ENCODE measurements at regions of chr17 and their contacts with region 1.

Region 1: GRCh38 chr17:58692239-58693055 is at the start of gene RAD51C:
- DNase-seq: peak; percentile 70 to 92 (median 84)
- ATAC-seq: peak; percentile 96
- H3K4me3 ChIP-seq: peak within 1 kb of the TSS; percentile 79
- H3K4me3 Mint-ChIP-seq: peak within 1 kb of the TSS; percentile 93
- H3K27ac ChIP-seq: peak within 1 kb of the TSS; percentile 66 to 83
- H3K27ac Mint-ChIP-seq: peak within 1 kb of the TSS; percentile 86
- H3K4me1 ChIP-seq: peaks cover 13% of the 10 kb centered on the region
- H3K4me1 Mint-ChIP-seq: peaks cover 28% of the 10 kb centered on the region
- H3K27me3 ChIP-seq: no peaks in the 10 kb centered on the region
- H3K27me3 Mint-ChIP-seq: no peaks in the 10 kb centered on the region
- CTCF ChIP-seq: no peak
- total RNA-seq, gene RAD51C: 10.4 to 11.6 TPM

Region 2: DNA sequence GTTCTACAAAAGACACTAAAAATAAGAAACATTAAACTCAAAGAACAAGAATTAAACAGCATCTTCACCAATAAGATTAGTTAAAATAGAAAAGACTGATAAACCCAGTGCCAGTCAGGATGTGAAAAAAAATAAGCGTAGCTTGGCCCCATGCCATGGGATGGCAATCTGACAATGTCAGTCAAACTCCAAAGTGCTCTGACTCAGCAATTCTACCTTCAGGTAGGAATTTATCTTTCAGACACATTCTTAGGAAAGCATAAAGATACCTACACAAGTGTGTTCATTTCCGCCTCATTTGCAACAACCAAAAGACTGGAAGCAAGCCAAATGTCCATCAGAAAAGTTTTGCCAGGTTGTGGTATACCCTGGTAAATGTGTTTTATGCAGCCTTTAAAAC is 402.6 kb before region 1 on chr17:
- CTCF ChIA-PET with region 1: no interaction called
- POLR2A ChIA-PET with region 1: no interaction called
- intact Hi-C with region 1: no loop called
- DNase-seq: no peak
- ATAC-seq: no peak
- H3K4me3 ChIP-seq: no peak overlapping the region
- H3K4me3 Mint-ChIP-seq: no peak overlapping the region
- H3K27ac ChIP-seq: no peak overlapping the region
- H3K27ac Mint-ChIP-seq: no peak overlapping the region
- H3K4me1 ChIP-seq: no peaks in the 10 kb centered on the region
- H3K4me1 Mint-ChIP-seq: no peaks in the 10 kb centered on the region
- H3K27me3 ChIP-seq: peaks cover 0 to 2% of the 10 kb centered on the region in 2 experiments
- H3K27me3 Mint-ChIP-seq: peaks cover 11% of the 10 kb centered on the region
- CTCF ChIP-seq: no peak

Region 3: DNA sequence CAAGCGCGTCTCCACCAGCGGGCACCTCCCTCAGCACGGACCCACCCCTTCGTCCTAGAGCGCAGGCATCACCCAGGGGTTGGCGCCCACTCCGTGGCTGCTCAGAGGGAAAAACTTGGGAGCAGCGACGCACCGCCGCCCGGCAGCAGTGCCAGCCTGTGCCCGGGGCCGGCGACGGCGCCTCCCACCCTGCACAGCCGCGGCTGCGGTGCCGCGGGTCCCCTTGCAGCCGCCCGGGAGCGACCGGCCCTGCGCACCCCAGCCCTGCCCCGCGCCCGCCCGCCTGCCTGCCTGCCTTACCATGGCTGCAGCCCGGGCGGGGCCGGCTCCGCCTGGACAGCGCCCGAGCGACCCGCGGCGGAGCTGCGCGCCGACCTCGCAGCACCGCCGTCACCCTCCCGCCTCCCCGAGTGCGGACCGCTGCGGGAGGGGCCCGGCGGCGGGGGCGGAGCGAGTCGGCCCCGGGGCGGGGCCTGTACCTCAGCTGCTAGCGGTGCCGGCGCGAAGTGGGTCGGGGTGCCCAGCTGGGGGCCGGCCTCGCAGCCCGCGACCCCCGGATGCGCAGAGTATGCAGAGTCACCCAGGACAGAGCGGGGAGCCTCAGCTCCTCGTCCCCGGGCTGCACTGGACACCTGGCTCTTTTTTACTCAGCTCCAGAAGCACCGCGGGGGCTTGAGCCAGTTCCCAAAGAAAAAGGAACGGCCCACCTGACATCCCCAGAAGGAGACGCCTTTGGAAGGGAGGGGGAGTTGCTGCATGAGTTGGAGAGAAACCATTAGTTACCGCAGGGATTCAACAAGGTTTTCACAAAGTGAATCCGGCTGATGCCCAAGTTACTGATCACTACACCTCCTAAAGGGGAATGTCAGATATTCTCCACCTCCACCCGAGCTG is 160.5 kb before region 1 on chr17:
- CTCF ChIA-PET with region 1: no interaction called
- POLR2A ChIA-PET with region 1: no interaction called
- intact Hi-C with region 1: loop called in 1 of 2 experiments (anchors 5 kb)
- DNase-seq: peak; percentile 23 to 82 (median 61)
- ATAC-seq: peak; percentile 98
- H3K4me3 ChIP-seq: peak overlapping the region; percentile 45
- H3K4me3 Mint-ChIP-seq: peak overlapping the region; percentile 66
- H3K27ac ChIP-seq: no peak overlapping the region
- H3K27ac Mint-ChIP-seq: no peak overlapping the region
- H3K4me1 ChIP-seq: peaks cover 19% of the 10 kb centered on the region
- H3K4me1 Mint-ChIP-seq: no peaks in the 10 kb centered on the region
- H3K27me3 ChIP-seq: peaks cover 6 to 14% of the 10 kb centered on the region in 2 experiments
- H3K27me3 Mint-ChIP-seq: peaks cover 44% of the 10 kb centered on the region
- CTCF ChIP-seq: no peak

Region 4: GRCh38 chr17:58587702-58588254 is 104.7 kb before region 1 on chr17:
- CTCF ChIA-PET with region 1: no interaction called
- POLR2A ChIA-PET with region 1: interaction called, 3 read pairs
- intact Hi-C with region 1: loop called in 1 of 2 experiments (anchors 5 kb)
- DNase-seq: peak; percentile 33 to 81 (median 47)
- ATAC-seq: peak; percentile 92
- H3K4me3 ChIP-seq: no peak overlapping the region
- H3K4me3 Mint-ChIP-seq: no peak overlapping the region
- H3K27ac ChIP-seq: no peak overlapping the region
- H3K27ac Mint-ChIP-seq: no peak overlapping the region
- H3K4me1 ChIP-seq: peaks cover 5% of the 10 kb centered on the region
- H3K4me1 Mint-ChIP-seq: peaks cover 4% of the 10 kb centered on the region
- H3K27me3 ChIP-seq: no peaks in the 10 kb centered on the region
- H3K27me3 Mint-ChIP-seq: peaks cover 8% of the 10 kb centered on the region
- CTCF ChIP-seq: peak; percentile 91

Region 5: DNA sequence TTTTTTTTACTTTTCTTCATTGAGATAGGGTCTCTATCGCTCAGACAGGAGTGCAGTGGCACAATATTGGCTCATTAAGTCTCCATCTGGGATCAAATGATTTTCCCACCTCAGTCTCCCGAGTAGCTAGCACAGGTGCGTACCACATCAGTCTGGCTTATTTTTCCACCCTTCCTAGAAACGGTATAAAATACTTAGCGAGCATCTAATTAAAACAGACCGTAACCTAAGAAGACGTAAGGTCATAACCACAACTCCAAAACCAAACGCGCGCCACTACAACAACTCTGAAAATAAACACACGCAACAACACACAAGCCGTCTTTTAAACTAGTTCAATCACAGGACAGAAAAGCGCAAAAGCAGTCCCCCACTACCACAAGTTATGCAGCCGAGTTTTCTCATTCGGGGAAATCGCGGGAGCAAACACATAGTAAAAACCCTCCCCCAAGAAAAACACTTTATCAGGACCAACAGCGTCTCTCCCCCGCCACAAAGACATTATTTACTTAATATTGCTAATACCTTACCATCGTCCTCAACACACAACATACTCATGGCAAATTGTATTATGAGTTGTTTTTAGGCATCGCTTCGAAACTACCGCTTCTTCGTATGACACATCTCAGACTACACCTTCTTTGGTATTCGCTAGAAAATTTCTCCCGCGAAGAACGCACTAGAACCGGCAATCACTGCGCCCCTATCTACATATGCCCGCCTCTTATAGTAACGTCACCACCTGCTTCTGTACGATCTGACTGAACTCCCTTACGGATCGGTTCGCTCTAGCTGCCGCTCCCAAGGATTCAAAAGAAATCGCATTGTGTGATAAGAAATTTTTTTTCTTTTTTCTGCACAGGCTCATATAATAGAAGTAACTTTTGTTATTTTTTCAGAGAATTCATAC is 33.4 kb before region 1 on chr17:
- CTCF ChIA-PET with region 1: no interaction called
- POLR2A ChIA-PET with region 1: interaction called, 12 read pairs
- intact Hi-C with region 1: loop called (anchors 2 kb)
- DNase-seq: peak; percentile 48 to 93 (median 66)
- ATAC-seq: peak; percentile 85
- H3K4me3 ChIP-seq: peak overlapping the region; percentile 58
- H3K4me3 Mint-ChIP-seq: peak overlapping the region; percentile 85
- H3K27ac ChIP-seq: peak overlapping the region; percentile 79 to 96
- H3K27ac Mint-ChIP-seq: peak overlapping the region; percentile 97
- H3K4me1 ChIP-seq: peaks cover 12% of the 10 kb centered on the region
- H3K4me1 Mint-ChIP-seq: peaks cover 15% of the 10 kb centered on the region
- H3K27me3 ChIP-seq: no peaks in the 10 kb centered on the region
- H3K27me3 Mint-ChIP-seq: peaks cover 5% of the 10 kb centered on the region
- CTCF ChIP-seq: no peak